Naive thymus-derived CD8-positive, alpha-beta T cell (primary cell): ENCODE measurements at regions of chr1 and their contacts with region 1.

Region 1: GRCh38 chr1:226702957-226703831 is 35.9 kb downstream of the ITPKB start:
- DNase-seq: peak; percentile 79 to 91 (median 87)
- ATAC-seq: peak; percentile 76 to 84
- H3K4me3 Mint-ChIP-seq: peak overlapping the region; percentile 56 to 92 (median 84)
- H3K27ac Mint-ChIP-seq: peak overlapping the region; percentile 87 to 100 (median 96)
- H3K4me1 Mint-ChIP-seq: peaks cover 36 to 90% (median 87%) of the 10 kb centered on the region in 4 donors
- H3K27me3 Mint-ChIP-seq: no peaks in the 10 kb centered on the region

Region 2: DNA sequence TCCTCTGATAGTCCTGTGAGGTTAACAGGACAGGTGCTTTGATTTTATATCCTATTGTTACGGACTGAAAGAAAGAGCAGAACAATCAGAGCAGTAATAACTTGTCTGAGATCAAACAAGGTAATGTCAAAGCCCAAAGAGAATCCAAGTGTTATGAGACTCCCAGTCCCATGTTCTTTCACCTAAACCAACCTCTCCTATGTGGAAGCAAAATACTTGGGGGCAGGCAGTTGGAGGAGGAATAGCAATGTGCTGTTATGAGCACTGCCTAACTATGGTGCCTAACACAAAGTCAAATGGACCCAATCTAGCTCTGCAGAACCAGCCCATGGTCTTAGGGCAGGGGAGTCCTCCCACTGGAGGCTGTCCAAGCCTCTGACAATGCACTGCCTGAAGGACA is 544.7 kb before region 1 on chr1:
- POLR2A ChIA-PET with region 1: no interaction called
- DNase-seq: no peak
- ATAC-seq: no peak
- H3K4me3 Mint-ChIP-seq: no peak overlapping the region
- H3K27ac Mint-ChIP-seq: peak overlapping the region in 3 of 10 donors; percentile 10 to 65 (median 31)
- H3K4me1 Mint-ChIP-seq: peaks cover 3 to 48% (median 8%) of the 10 kb centered on the region in 4 donors
- H3K27me3 Mint-ChIP-seq: no peaks in the 10 kb centered on the region

Region 3: DNA sequence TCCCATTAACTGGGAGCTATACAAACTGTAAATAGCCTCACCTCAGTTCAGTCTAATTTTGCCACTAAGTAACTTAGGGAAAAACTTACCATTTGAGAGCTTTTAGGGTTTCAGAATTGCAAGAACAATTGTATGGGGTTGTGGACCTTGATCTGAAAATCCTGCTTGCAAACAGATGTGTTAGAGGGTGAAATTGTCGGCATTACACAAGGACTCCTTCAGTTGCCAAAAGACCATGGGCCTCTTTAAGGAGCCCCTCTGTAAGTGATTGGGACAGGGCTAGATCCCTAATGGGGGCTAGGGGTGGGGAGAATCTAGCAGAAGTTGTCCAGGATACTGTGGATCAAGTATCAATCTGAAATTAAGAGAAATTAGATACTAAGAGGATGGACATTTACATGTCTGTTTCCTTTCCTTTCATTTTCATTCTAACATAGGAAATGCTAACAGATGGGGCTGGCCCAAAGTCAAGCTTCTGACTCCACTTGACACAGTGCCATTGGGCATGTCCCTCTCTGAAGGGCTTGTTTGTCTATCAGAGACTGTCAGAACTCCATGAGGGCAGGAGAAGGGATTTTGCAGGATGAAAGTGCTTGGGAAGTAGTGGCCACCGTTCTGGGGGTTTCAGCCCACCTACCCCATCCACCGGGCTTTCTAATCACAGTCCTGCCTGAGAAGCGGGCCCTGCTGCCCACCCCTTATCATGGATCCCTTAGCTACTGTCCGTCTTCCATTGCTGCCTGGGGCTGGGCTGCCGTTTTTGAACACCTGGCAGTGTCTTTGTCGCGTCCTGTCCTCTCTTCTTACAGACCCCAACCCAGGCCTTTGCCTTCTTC is 100.0 kb before region 1 on chr1:
- POLR2A ChIA-PET with region 1: no interaction called
- DNase-seq: no peak
- ATAC-seq: no peak
- H3K4me3 Mint-ChIP-seq: no peak overlapping the region
- H3K27ac Mint-ChIP-seq: peak overlapping the region in 3 of 10 donors; percentile 20 to 65 (median 38)
- H3K4me1 Mint-ChIP-seq: peaks cover 0 to 3% (median 0%) of the 10 kb centered on the region in 4 donors
- H3K27me3 Mint-ChIP-seq: peaks cover 0 to 6% (median 0%) of the 10 kb centered on the region in 5 donors

Region 4: GRCh38 chr1:226642876-226643576 is 60.2 kb before region 1 on chr1:
- POLR2A ChIA-PET with region 1: interaction called, 16 read pairs
- DNase-seq: peak in 4 of 10 donors; percentile 25 to 64 (median 52)
- ATAC-seq: peak; percentile 52 to 69
- H3K4me3 Mint-ChIP-seq: peak overlapping the region; percentile 53 to 86 (median 74)
- H3K27ac Mint-ChIP-seq: peak overlapping the region in 9 of 10 donors; percentile 88 to 97 (median 93)
- H3K4me1 Mint-ChIP-seq: peaks cover 28 to 70% (median 67%) of the 10 kb centered on the region in 4 donors
- H3K27me3 Mint-ChIP-seq: no peaks in the 10 kb centered on the region

Region 5: DNA sequence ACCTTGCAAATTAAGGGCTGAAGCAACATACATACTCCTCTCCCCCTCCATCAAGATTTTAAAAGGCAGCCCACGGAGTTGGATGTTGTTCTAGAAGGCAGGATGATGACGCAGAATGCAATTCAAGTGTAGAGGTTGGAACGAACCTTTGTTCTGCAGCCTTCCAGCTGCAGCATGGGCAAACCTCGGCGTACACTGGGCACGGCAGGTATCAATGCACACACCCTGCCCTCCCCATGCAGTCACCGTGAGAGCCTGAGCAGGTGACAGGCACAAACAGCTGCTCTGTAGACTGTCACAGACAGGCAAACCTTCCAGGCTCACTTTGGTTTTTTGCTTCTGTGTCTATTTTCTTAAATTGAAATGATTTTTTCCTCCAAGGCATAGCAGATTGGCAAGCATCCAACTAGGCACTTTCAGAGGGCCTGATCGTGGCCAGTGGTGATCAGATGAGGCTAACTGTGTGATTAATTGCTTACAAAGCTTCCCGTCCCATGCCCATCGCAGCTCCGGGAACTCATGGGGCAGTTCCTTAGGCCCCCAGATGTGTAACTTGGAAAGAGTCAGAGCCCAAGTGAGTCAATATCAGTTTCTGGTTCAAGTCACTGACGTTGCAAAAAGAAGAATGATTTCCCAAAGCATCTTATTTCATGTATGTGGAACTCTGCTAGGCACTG is 46.5 kb before region 1 on chr1:
- POLR2A ChIA-PET with region 1: interaction called, 20 read pairs
- DNase-seq: peak in 9 of 10 donors; percentile 57 to 88 (median 84)
- ATAC-seq: peak; percentile 64 to 78
- H3K4me3 Mint-ChIP-seq: peak overlapping the region in 9 of 10 donors; percentile 47 to 92 (median 74)
- H3K27ac Mint-ChIP-seq: no peak overlapping the region
- H3K4me1 Mint-ChIP-seq: peaks cover 0 to 50% (median 0%) of the 10 kb centered on the region in 4 donors
- H3K27me3 Mint-ChIP-seq: no peaks in the 10 kb centered on the region

Region 6: DNA sequence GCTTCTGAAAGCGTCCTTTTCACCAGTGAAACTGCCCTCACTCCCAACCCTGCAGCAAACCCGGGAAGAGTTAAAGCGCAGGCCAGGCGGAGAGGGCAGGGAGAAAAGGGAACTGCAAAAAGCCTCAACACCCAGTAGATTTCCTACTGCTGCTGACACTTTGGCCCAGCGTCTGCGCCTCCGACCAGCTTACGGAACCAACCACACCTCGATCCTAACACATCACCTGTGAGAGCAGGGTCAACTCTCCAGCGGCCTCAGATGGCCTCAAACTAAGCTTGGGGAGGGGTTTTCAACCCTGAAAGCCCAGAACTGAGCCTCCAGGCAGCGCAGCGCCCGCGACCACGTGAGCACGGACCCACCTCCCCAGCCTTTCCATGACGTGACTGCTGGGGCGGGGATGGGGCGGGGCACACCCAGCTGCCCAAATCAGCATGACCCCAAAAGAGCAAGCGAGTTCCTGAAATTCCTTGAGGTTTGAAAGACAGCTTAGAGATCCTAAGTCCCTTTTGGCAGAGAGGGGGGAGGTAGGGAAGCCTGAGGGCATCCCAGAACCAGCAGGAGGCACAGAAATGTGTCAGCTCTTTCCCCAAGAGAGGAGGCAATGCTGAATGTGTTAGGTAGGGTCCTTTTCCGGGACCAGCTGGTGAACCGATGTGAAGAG is 23.2 kb before region 1 on chr1:
- POLR2A ChIA-PET with region 1: interaction called, 156 read pairs
- DNase-seq: peak; percentile 65 to 89 (median 76)
- ATAC-seq: peak; percentile 13 to 30
- H3K4me3 Mint-ChIP-seq: peak overlapping the region; percentile 75 to 97 (median 88)
- H3K27ac Mint-ChIP-seq: peak overlapping the region; percentile 99 to 100 (median 99)
- H3K4me1 Mint-ChIP-seq: peaks cover 70 to 100% (median 99%) of the 10 kb centered on the region in 4 donors
- H3K27me3 Mint-ChIP-seq: no peaks in the 10 kb centered on the region

Region 7: DNA sequence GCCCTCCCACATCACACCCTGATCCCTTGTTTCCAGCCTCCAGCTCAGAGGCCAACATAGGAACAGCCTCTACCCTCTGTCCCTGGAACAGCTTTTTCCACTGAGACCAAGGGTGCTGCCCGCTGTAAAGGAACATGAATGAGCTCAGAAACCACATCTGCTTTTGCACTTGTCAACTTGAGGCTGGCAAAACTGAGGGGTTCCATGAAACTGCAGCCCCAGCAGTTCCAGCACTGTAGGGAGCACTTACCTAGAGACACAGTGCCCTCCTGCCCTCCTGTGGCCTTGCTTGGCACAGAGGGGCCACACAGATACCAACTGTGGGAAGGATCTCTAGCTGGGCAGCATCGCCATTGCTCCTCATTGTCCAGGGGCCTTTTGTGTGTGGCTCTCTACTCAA is 15.8 kb before region 1 on chr1:
- POLR2A ChIA-PET with region 1: interaction called, 156 read pairs
- DNase-seq: peak in 6 of 10 donors; percentile 43 to 78 (median 62)
- ATAC-seq: peak; percentile 21 to 23
- H3K4me3 Mint-ChIP-seq: peak overlapping the region; percentile 4 to 82 (median 66)
- H3K27ac Mint-ChIP-seq: peak overlapping the region; percentile 98 to 100 (median 99)
- H3K4me1 Mint-ChIP-seq: peaks cover 73 to 100% (median 100%) of the 10 kb centered on the region in 4 donors
- H3K27me3 Mint-ChIP-seq: no peaks in the 10 kb centered on the region

Region 8: GRCh38 chr1:226722240-226722900 is 19.2 kb after region 1 on chr1:
- POLR2A ChIA-PET with region 1: no interaction called
- DNase-seq: peak in 1 of 10 donors; percentile 36
- ATAC-seq: peak; percentile 16 to 23
- H3K4me3 Mint-ChIP-seq: peak overlapping the region; percentile 78 to 99 (median 93)
- H3K27ac Mint-ChIP-seq: peak overlapping the region; percentile 86 to 98 (median 97)
- H3K4me1 Mint-ChIP-seq: peaks cover 55 to 98% (median 96%) of the 10 kb centered on the region in 4 donors
- H3K27me3 Mint-ChIP-seq: no peaks in the 10 kb centered on the region